Naive thymus-derived CD4-positive, alpha-beta T cell (primary cell): ENCODE measurements at regions of chr4 and their contacts with region 1.

Region 1: DNA sequence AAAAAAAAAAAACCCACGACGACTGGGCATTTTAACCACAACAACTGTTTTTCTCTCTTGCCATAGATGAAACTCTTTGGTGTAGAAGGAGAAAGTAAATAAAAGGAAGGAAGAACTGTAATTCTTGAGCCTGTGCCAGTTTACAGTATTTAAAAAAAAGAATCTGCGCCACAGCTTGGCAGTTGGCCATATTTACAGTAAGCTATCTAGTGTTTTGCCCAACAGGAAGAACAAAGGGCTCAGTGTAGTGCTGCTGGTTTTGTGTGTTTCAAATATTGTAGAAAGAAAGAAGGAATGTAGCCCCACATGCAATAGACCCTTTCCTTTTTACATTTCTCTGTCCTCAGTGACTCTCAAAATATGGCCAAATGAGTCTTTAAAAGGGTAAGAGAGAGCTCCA is 66.1 kb downstream of the NR3C2 start:
- DNase-seq: peak in 7 of 9 donors; percentile 64 to 84 (median 76)
- ATAC-seq: peak; percentile 86
- H3K4me3 ChIP-seq: peak overlapping the region; percentile 37
- H3K4me3 Mint-ChIP-seq: peak overlapping the region in 9 of 10 donors; percentile 67 to 88 (median 82)
- H3K27ac ChIP-seq: peak overlapping the region; percentile 59
- H3K27ac Mint-ChIP-seq: peak overlapping the region in 8 of 9 donors; percentile 88 to 99 (median 92)
- H3K4me1 ChIP-seq: peaks cover 0 to 8% of the 10 kb centered on the region in 2 donors
- H3K4me1 Mint-ChIP-seq: peaks cover 6 to 61% (median 44%) of the 10 kb centered on the region in 7 donors
- H3K27me3 ChIP-seq: no peaks in the 10 kb centered on the region
- H3K27me3 Mint-ChIP-seq: no peaks in the 10 kb centered on the region

Region 2: GRCh38 chr4:148391056-148391455 is 14.9 kb after region 1 on chr4:
- CTCF ChIA-PET with region 1: interaction called, 5 read pairs
- POLR2A ChIA-PET with region 1: interaction called, 9 read pairs
- intact Hi-C with region 1: loop called in 1 of 2 experiments (anchors 2 kb)
- DNase-seq: no peak
- ATAC-seq: no peak
- H3K4me3 ChIP-seq: no peak overlapping the region
- H3K4me3 Mint-ChIP-seq: peak overlapping the region in 1 of 10 donors; percentile 32
- H3K27ac ChIP-seq: no peak overlapping the region
- H3K27ac Mint-ChIP-seq: no peak overlapping the region
- H3K4me1 ChIP-seq: no peaks in the 10 kb centered on the region
- H3K4me1 Mint-ChIP-seq: peaks cover 0 to 72% (median 60%) of the 10 kb centered on the region in 7 donors
- H3K27me3 ChIP-seq: no peaks in the 10 kb centered on the region
- H3K27me3 Mint-ChIP-seq: no peaks in the 10 kb centered on the region

Region 3: DNA sequence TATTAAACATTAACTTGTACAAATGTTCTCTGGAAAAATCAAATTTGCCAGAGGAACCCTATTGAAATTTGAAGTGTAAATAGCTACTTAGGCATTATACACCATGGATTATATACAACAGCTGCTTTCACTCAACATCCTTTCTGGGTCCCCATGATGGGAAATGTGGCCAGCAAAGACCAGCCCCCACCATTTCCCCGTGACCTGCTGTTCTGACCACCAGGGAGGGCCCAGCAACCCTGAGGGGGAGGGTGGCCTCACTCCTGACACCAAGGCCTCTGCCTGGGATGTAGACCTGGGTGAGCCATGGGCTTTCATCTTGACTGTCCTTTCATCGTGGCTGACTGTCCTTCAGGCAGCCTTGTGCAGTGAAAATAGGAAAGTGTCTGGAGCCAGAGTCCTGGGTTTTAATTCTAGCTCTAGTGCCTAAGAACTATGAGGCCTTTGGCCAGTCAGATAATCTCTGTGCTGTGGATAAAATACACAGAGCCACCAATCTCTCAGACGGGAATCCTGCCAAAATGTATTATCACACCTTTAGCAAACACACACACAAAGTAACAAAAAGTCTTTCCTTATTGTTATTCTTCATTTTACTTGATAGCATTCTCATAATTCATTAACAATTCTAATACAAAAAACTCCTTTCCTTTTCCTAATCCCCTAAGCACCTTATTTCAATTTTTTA is 21.0 kb after region 1 on chr4:
- CTCF ChIA-PET with region 1: no interaction called
- POLR2A ChIA-PET with region 1: interaction called, 9 read pairs
- intact Hi-C with region 1: loop called in 1 of 2 experiments (anchors 2 kb)
- DNase-seq: no peak
- ATAC-seq: no peak
- H3K4me3 ChIP-seq: no peak overlapping the region
- H3K4me3 Mint-ChIP-seq: no peak overlapping the region
- H3K27ac ChIP-seq: no peak overlapping the region
- H3K27ac Mint-ChIP-seq: peak overlapping the region in 2 of 9 donors; percentile 6 to 8
- H3K4me1 ChIP-seq: no peaks in the 10 kb centered on the region
- H3K4me1 Mint-ChIP-seq: peaks cover 0 to 61% (median 55%) of the 10 kb centered on the region in 7 donors
- H3K27me3 ChIP-seq: no peaks in the 10 kb centered on the region
- H3K27me3 Mint-ChIP-seq: no peaks in the 10 kb centered on the region